ENCODE measurements at regions of chr5 and their contacts with region 1.

Region 1: DNA sequence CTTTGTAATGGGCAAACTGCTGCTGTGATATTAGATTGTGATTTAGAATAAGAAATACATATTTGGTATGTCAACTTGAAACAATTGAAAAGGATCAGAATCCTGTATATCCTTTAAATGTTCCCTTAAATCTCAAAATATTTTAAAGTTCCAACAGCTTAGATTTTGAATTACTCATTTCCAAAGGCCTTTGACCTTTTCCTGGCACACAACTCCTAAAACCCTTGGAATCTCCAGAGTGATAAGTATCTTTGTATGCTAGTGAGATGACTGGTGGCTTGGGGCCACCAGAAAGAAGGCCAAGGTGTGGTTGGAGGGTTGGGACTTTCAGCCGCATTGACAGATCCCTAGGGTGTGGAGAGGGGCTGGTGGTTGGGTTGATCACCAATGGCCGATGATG is 104.7 kb downstream of the YIPF5 start:
- DNase-seq: no peak

Region 2: DNA sequence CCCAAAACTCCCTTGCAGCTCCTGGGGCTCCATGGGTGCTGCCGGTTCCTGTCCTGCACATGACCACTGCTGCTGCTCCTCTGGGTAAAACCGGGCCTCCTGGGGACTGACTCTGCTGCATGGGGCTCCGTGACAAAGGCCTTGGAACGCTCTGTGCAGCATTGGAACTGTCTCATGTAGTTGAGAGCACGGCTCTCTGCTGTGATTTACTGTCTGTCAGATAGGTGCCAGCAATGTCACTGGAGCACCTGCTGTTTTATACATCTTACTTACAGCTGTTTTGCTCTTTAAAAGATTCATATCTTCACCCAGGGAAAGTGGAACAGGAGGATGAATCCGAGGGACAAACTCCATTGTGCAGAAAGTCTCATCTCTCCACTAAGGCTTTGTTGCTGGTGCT is 33.4 kb before region 1 on chr5:
- intact Hi-C with region 1: loop called (anchors 2 kb)
- DNase-seq: no peak

Measured in head of caudate nucleus (tissue), 42 donors.